H1 (cell line): ENCODE measurements at regions of chr15 and their contacts with region 1.

Region 1: GRCh38 chr15:38724827-38725226 is 160.2 kb upstream of the RASGRP1 start:
- DNase-seq: no peak
- H3K4me3 ChIP-seq: no peak overlapping the region
- H3K27ac ChIP-seq: no peak overlapping the region
- H3K4me1 ChIP-seq: no peaks in the 10 kb centered on the region
- H3K27me3 ChIP-seq: no peaks in the 10 kb centered on the region
- CTCF ChIP-seq: no peak
- EP300 ChIP-seq: no peak
- POLR2A ChIP-seq: no peak
- RAD21 ChIP-seq: no peak

Region 2: DNA sequence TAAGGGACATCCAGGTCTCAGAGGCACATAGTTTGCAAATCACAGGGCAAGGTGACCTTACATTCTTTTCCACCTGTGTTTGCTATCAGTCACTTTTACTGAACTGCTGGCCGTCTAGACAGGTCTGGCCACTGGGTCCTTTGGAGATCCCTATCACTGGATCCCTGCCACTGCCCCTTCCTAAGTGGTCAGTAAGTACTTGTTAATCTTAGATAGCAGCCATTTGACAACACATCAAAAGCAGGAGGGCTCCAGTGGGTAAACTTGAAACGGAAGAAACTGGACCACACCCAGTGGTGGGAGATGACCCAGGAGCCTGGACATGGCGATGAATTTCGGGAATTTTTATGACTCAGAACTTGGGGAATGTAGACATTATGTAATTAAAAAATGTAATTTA is 131.3 kb before region 1 on chr15:
- CTCF ChIA-PET with region 1: no interaction called
- POLR2A ChIA-PET with region 1: no interaction called
- DNase-seq: no peak
- H3K4me3 ChIP-seq: no peak overlapping the region
- H3K27ac ChIP-seq: no peak overlapping the region
- H3K4me1 ChIP-seq: no peaks in the 10 kb centered on the region
- H3K27me3 ChIP-seq: no peaks in the 10 kb centered on the region
- CTCF ChIP-seq: no peak
- EP300 ChIP-seq: no peak
- POLR2A ChIP-seq: no peak
- RAD21 ChIP-seq: no peak

Region 3: GRCh38 chr15:38768970-38769369 is 44.1 kb after region 1 on chr15:
- CTCF ChIA-PET with region 1: interaction called, 10 read pairs
- POLR2A ChIA-PET with region 1: no interaction called
- DNase-seq: peak; percentile 15 to 47
- H3K4me3 ChIP-seq: no peak overlapping the region
- H3K27ac ChIP-seq: no peak overlapping the region
- H3K4me1 ChIP-seq: no peaks in the 10 kb centered on the region
- H3K27me3 ChIP-seq: no peaks in the 10 kb centered on the region
- CTCF ChIP-seq: peak; percentile 35 to 53 (median 50)
- EP300 ChIP-seq: no peak
- POLR2A ChIP-seq: no peak
- RAD21 ChIP-seq: peak; percentile 37 to 52